Activated B cell treated with CpG ODN at 0.5 μM for 24 hours (primary cell): ENCODE measurements at regions of chr19 and their contacts with region 1.

Region 1: GRCh38 chr19:15432629-15433518 is 14.1 kb upstream of the AKAP8L start:
- DNase-seq: peak; percentile 92
- ATAC-seq: peak; percentile 89
- H3K4me3 Mint-ChIP-seq: peak overlapping the region; percentile 97
- H3K27ac Mint-ChIP-seq: peak overlapping the region; percentile 93
- H3K4me1 Mint-ChIP-seq: peaks cover 31% of the 10 kb centered on the region
- H3K27me3 Mint-ChIP-seq: no peaks in the 10 kb centered on the region
- CTCF ChIP-seq: no peak

Region 2: GRCh38 chr19:15195371-15196334 is 237.2 kb before region 1 on chr19:
- CTCF ChIA-PET with region 1: no interaction called
- POLR2A ChIA-PET with region 1: no interaction called
- intact Hi-C with region 1: no loop called
- DNase-seq: no peak
- ATAC-seq: peak; percentile 40
- H3K4me3 Mint-ChIP-seq: peak overlapping the region; percentile 44
- H3K27ac Mint-ChIP-seq: no peak overlapping the region
- H3K4me1 Mint-ChIP-seq: peaks cover 27% of the 10 kb centered on the region
- H3K27me3 Mint-ChIP-seq: peaks cover 54% of the 10 kb centered on the region
- CTCF ChIP-seq: no peak

Region 3: DNA sequence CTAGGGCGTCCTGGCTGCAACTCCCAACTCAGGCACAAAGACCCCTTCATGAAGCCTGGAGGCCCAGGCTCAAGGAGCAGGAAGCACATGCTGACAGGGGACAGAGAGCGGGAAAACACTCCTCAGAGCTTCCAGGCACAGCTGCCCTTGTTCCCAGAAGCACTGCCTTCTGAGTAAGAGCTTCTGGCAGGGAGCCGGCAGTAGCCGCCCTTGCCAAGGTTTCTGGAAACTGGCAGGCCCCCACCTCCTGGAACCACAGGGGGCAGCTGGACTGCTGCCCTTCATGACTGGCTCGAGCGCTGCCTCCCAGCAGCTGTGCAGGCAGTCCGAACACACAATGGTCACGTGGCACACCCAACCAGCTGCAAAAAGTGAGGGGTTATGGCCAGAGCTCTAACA is 167.0 kb before region 1 on chr19:
- CTCF ChIA-PET with region 1: no interaction called
- POLR2A ChIA-PET with region 1: no interaction called
- intact Hi-C with region 1: no loop called
- DNase-seq: no peak
- ATAC-seq: no peak
- H3K4me3 Mint-ChIP-seq: no peak overlapping the region
- H3K27ac Mint-ChIP-seq: no peak overlapping the region
- H3K4me1 Mint-ChIP-seq: peaks cover 12% of the 10 kb centered on the region
- H3K27me3 Mint-ChIP-seq: no peaks in the 10 kb centered on the region
- CTCF ChIP-seq: no peak

Region 4: DNA sequence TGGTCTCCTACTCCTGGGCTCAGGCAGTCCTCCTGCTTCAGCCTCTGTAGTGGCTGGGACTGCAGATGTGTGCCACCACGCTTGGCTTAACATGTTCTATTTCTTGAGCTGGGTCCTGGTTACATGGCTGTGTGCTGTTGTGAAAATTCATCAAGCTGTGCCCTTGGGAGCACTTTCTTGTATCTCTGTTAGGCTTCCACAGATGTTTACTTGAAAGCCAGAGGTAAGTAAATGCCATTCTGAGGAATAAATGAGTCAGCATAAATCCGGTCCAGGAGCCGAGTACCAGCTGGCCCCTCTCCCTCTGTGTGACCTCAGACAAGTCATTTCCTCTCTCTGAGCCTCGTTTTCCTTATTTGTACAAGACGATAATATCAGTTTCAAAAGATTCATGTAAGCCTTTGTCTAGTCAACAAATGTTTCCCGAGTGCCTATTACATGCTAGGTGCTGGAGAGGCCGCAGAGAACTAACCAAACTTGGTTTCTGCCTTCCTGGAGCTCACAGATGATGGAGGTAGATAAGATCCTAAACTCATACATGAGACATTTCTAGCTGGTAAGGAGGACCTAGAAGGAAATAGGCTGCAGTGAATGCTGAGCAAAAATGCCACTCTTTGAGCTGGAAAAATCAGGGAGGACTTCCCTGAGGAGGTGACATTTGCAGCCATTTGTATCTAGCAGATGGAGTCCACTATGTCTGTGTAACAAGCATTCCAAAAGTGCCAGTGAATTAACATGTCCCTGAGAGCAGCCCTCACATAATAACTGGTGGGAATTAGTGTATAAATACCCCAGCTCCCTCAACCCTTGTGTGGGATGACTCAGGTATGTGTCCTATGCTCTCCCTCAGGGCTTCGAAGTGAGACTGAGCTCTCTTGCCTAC is 34.2 kb after region 1 on chr19:
- CTCF ChIA-PET with region 1: no interaction called
- POLR2A ChIA-PET with region 1: interaction called, 27 read pairs
- intact Hi-C with region 1: loop called (anchors 1 kb)
- DNase-seq: no peak
- ATAC-seq: no peak
- H3K4me3 Mint-ChIP-seq: peak overlapping the region; percentile 50
- H3K27ac Mint-ChIP-seq: peak overlapping the region; percentile 12
- H3K4me1 Mint-ChIP-seq: peaks cover 50% of the 10 kb centered on the region
- H3K27me3 Mint-ChIP-seq: peaks cover 15% of the 10 kb centered on the region
- CTCF ChIP-seq: no peak